GM23248 (cell line): ENCODE measurements at regions of chr1 and their contacts with region 1.

Region 1: DNA sequence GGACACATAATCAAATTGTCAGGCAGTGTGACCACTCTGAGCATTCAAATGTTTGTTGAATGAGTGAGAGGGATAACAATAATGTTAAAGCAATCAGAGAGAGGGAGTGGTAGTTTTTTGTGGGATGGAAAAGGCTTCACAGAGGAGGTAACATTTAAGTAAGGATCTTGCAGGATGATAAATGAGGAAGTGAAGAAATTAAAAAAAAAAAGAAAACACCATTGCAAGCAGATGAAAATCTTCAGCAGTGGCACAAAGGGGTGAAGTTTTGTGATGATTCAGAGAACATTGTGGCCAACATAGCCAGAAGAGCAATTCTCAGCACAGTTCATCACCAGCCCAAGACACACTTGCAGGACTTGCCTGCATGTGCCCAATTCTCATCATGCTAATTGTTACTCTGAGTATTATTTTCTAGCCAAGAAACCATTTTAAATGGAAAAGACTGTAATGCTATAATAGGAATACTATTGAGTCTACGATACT is 35.0 kb downstream of the OVGP1 start:
- DNase-seq: no peak
- H3K4me3 ChIP-seq: no peak overlapping the region
- H3K27ac ChIP-seq: no peak overlapping the region
- H3K4me1 ChIP-seq: no peaks in the 10 kb centered on the region
- H3K27me3 ChIP-seq: peaks cover 28% of the 10 kb centered on the region

Region 2: DNA sequence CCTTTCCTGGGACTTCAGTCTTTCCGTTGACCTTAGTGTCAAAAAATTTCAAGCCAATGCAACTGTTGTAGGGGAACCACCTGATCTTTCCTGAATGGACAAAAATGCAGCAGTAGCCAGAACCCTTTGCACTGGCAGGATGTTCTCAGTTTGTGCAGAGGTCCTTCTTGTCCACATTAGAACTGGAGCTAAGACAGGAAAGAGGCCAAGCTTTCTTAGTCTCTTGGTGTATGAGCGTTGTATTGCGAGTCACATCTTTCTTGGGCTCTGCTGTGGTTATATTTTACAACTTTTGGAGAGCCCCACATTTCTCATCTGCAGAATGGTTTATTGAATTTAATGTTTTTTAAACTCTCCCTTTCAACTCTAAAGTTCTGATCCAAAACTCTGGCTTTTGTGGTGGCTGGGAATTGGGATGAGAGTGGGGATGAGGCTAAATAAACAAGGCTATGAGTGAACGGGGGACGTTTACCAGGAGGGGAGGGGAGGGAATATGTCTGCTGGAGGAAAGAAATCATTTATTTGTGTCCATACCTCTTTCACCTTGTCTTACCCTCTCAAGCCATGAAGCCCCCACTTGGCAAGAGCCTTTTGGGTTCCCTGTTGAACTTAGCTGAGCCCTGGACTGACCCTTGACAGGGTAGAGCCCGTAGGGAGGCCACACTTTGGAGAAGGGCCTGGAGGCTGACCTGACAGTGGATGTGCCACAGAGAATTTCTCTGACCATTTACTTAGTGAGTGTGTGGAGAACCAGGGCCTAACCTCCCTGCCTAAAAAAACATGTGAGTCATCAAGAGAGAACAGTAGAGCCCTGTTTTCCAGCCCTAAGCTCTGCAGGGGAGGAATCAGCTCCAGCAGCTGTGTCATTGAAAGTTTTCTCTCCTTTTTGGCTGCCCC is 164.4 kb before region 1 on chr1:
- in situ Hi-C with region 1: loop called (anchors 5 kb)
- DNase-seq: peak; percentile 93
- H3K4me3 ChIP-seq: no peak overlapping the region; the same call in 1 of the 2 replicates
- H3K27ac ChIP-seq: peak overlapping the region; percentile 63
- H3K4me1 ChIP-seq: peaks cover 21% of the 10 kb centered on the region
- H3K27me3 ChIP-seq: no peaks in the 10 kb centered on the region

Region 3: DNA sequence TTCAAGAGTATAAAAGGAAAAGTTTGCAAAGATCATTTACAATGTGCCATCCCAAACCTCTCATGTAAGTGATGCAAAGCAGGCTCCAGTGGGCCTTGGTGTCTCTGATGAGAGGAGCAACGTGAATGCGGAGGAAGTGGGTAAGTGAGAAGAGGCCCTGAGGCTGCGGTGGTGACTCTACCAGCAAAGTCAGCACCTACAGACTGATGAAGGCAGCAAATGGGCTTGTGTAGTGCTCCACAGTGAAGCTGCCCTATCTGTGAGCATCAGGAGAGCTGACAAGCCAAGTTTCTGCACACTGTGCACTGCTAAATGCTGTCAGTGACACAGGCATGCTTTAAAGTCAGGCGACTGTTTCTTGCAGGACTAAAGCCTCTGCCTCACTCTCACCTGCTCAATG is 211.5 kb after region 1 on chr1:
- in situ Hi-C with region 1: no loop called
- DNase-seq: no peak
- H3K4me3 ChIP-seq: no peak overlapping the region
- H3K27ac ChIP-seq: no peak overlapping the region
- H3K4me1 ChIP-seq: peaks cover 21% of the 10 kb centered on the region
- H3K27me3 ChIP-seq: no peaks in the 10 kb centered on the region